ENCODE measurements at regions of chr1 and their contacts with region 1.

Region 1: DNA sequence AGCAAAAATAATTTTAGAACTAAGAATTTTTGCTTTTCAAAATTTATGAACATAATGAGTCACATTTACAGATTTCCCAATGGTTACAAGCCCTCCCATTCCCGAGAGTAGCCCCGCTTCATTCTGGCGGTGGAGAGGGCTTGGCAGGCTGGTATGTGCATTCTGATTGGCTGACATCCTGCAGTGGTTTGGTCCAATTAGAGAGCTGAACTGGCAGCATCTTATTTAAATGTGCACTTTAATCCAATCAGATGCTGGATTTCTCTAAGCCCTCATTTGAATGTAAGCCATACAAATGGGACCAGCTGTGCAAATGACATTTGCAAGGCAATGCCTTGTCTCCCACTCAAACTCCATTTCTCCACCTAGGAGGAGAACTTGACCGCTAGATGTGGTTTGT is 18.0 kb upstream of the TRIM17 start:
- DNase-seq: no peak
- H3K4me3 ChIP-seq: no peak overlapping the region
- H3K4me3 Mint-ChIP-seq: no peak overlapping the region
- H3K27ac Mint-ChIP-seq: peak overlapping the region; percentile 94
- H3K4me1 ChIP-seq: peaks cover 36% of the 10 kb centered on the region
- H3K4me1 Mint-ChIP-seq: peaks cover 26% of the 10 kb centered on the region
- H3K27me3 ChIP-seq: no peaks in the 10 kb centered on the region
- H3K27me3 Mint-ChIP-seq: no peaks in the 10 kb centered on the region
- CTCF ChIP-seq: no peak

Region 2: DNA sequence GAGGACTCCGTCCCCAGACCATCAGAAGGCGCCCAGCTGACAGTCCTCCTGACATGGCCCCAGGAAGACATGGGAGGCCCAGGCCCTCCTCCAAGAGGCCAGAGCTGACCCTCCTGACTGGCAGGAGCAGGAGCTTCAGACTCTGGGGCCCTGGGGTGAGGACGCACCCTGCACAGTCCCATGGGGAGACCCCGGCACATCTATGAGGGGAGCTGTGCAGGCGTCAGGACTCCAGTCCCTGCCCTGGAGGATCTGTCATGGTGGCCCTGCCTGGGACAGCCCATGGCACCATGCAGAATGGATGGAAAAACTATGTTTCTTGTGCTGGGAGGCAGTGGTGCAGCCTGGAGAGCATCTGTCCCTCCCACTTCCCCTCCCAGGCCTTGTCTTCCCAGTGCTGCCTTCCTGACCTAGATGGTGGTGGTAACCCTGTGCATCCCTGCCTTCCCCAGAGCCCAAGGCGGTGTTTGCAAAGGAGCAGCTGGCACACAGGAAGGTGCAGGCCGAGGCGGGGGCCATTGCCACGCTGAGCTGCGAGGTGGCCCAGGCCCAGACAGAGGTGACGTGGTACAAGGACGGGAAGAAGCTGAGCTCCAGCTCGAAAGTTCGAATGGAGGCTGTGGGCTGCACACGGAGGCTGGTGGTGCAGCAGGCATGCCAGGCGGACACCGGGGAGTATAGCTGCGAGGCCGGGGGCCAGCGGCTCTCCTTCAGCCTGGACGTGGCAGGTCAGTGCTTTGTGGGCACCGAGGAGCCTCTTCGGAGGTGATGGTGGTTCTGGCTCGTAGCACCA is 185.0 kb before region 1 on chr1:
- CTCF ChIA-PET with region 1: no interaction called
- POLR2A ChIA-PET with region 1: no interaction called
- intact Hi-C with region 1: no loop called
- DNase-seq: no peak
- H3K4me3 ChIP-seq: no peak overlapping the region
- H3K4me3 Mint-ChIP-seq: no peak overlapping the region
- H3K27ac Mint-ChIP-seq: no peak overlapping the region
- H3K4me1 ChIP-seq: no peaks in the 10 kb centered on the region
- H3K4me1 Mint-ChIP-seq: no peaks in the 10 kb centered on the region
- H3K27me3 ChIP-seq: no peaks in the 10 kb centered on the region
- H3K27me3 Mint-ChIP-seq: no peaks in the 10 kb centered on the region
- CTCF ChIP-seq: no peak

Region 3: DNA sequence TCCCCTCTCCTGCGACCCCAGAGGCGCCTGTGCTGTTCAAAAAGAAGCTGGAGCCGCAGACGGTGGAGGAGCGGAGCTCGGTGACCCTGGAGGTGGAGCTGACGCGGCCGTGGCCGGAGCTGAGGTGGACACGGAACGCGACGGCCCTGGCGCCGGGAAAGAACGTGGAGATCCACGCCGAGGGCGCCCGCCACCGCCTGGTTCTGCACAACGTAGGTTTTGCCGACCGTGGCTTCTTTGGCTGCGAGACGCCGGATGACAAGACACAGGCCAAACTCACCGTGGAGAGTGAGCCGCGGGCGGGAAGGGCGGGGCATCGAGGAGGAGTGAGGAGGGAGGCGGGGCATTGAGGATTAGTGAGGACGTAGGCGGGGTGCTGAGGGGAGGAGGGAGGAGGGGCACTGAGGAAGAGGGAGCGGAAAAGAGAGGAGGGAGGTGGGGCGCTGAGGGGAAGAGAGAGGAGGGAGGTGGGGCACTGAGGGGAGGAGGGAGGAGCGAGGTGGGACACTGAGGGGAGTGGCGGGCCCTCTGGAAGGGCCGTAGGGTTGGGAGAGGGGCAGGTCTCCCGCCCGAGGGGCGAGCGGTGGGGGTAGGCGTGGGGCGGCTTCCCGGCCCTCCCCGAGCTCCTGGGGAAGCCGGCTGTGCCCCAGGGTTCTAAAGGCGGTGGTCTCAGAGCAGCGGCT is 158.8 kb before region 1 on chr1:
- CTCF ChIA-PET with region 1: no interaction called
- POLR2A ChIA-PET with region 1: no interaction called
- intact Hi-C with region 1: no loop called
- DNase-seq: peak; percentile 76 to 89
- H3K4me3 ChIP-seq: peak overlapping the region; percentile 77
- H3K4me3 Mint-ChIP-seq: peak overlapping the region; percentile 75
- H3K27ac Mint-ChIP-seq: no peak overlapping the region
- H3K4me1 ChIP-seq: no peaks in the 10 kb centered on the region; the same call in 1 of the 2 replicates
- H3K4me1 Mint-ChIP-seq: no peaks in the 10 kb centered on the region
- H3K27me3 ChIP-seq: no peaks in the 10 kb centered on the region
- H3K27me3 Mint-ChIP-seq: no peaks in the 10 kb centered on the region
- CTCF ChIP-seq: no peak

Region 4: GRCh38 chr1:228358039-228358763 is 76.5 kb before region 1 on chr1:
- CTCF ChIA-PET with region 1: no interaction called
- POLR2A ChIA-PET with region 1: no interaction called
- intact Hi-C with region 1: no loop called
- DNase-seq: no peak
- H3K4me3 ChIP-seq: no peak overlapping the region
- H3K4me3 Mint-ChIP-seq: no peak overlapping the region
- H3K27ac Mint-ChIP-seq: no peak overlapping the region
- H3K4me1 ChIP-seq: no peaks in the 10 kb centered on the region
- H3K4me1 Mint-ChIP-seq: no peaks in the 10 kb centered on the region
- H3K27me3 ChIP-seq: no peaks in the 10 kb centered on the region
- H3K27me3 Mint-ChIP-seq: no peaks in the 10 kb centered on the region
- CTCF ChIP-seq: no peak

Region 5: GRCh38 chr1:228416217-228416933 is 18.3 kb before region 1 on chr1 and contains the start of gene TRIM17:
- CTCF ChIA-PET with region 1: no interaction called
- POLR2A ChIA-PET with region 1: interaction called, 3 read pairs
- intact Hi-C with region 1: loop called (anchors 2 kb)
- DNase-seq: peak in 1 of 2 experiments; percentile 62
- H3K4me3 ChIP-seq: peak within 1 kb of the TSS; percentile 42
- H3K4me3 Mint-ChIP-seq: peak within 1 kb of the TSS; percentile 71
- H3K27ac Mint-ChIP-seq: peak within 1 kb of the TSS; percentile 81
- H3K4me1 ChIP-seq: peaks cover 24% of the 10 kb centered on the region
- H3K4me1 Mint-ChIP-seq: peaks cover 30% of the 10 kb centered on the region
- H3K27me3 ChIP-seq: no peaks in the 10 kb centered on the region
- H3K27me3 Mint-ChIP-seq: no peaks in the 10 kb centered on the region
- CTCF ChIP-seq: peak in 1 of 2 experiments; percentile 11
- total RNA-seq, gene TRIM17: 4.0 and 4.5 TPM in 2 replicates

Region 6: GRCh38 chr1:228446852-228447251 is 12.2 kb after region 1 on chr1:
- CTCF ChIA-PET with region 1: no interaction called
- POLR2A ChIA-PET with region 1: no interaction called
- intact Hi-C with region 1: no loop called
- DNase-seq: no peak
- H3K4me3 ChIP-seq: no peak overlapping the region
- H3K4me3 Mint-ChIP-seq: no peak overlapping the region
- H3K27ac Mint-ChIP-seq: peak overlapping the region; percentile 48
- H3K4me1 ChIP-seq: peaks cover 30% of the 10 kb centered on the region
- H3K4me1 Mint-ChIP-seq: peaks cover 21% of the 10 kb centered on the region
- H3K27me3 ChIP-seq: no peaks in the 10 kb centered on the region
- H3K27me3 Mint-ChIP-seq: no peaks in the 10 kb centered on the region
- CTCF ChIP-seq: no peak

Measured in Caco-2 (cell line).